ENCODE measurements at regions of chr1 and their contacts with region 1.

Region 1: DNA sequence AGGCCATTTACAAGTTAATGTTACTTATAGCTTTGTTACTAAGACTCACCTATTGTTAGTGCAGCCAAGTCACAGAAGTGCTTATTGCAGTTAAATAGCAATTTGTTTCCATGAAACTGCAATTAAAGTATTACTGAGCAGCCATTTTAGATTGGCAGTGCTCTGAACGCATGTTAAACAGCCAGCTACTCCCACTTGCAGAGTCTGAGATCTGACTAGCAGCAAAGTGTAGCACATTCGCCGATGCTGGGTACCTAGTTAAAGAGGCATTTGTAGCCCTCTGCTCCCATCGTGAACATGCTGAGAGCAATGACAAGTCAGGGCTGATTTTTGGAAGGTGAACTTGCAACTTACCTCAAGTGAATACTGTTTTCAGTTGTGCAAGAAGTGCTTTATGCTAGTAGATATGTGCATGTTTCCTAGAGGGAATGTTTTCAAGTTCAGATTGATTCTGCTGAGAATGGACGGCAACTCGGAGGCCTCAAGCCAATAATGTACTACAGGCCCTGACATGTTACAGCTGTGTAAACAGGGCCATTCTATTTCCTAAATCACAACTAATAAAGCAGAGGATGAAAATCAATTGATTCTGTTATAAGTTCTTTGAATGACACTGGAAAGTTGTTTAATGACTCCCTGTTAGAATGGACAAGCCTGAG is 19.8 kb downstream of the LMO4 start:
- DNase-seq: no peak
- ATAC-seq: peak; percentile 40
- H3K4me3 ChIP-seq: no peak overlapping the region
- H3K27ac ChIP-seq: no peak overlapping the region
- H3K4me1 ChIP-seq: no peaks in the 10 kb centered on the region
- H3K27me3 ChIP-seq: no peaks in the 10 kb centered on the region
- CTCF ChIP-seq: no peak
- EP300 ChIP-seq: no peak
- POLR2A ChIP-seq: no peak
- RAD21 ChIP-seq: no peak

Region 2: DNA sequence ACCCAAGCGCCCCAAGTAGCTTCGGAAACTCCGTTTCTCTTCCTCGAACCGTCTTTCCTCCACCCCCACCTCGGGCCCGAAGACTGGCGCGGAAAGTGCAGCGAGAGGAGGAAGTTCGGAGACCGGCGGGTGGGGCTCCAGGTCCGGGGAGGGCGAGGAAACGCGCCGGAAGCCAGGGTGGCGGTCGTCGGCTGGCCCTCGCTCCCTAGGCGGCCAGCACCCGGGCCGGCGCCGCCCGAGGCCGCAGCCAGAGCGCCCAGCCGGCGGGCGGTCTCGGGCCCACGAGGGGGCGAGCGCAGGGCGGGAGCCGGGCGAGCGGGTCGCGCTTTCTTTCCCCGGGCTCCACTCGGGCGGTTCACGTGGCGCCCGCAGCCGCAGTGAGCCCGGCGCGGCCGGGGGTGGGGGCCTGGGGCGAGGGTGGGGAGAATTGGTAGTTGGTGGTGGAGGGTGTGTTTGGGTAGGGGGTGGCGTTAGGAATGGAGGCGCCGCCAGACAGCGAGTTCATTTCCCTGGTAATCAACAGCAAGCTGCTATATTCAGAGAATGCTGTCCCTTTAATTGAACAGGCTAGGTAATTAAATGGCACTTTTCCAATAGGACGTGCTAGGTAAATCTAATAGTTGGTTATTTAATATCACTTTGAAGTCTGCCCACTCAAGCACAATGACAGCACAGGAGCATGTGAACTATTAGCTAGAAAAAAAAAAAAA is 13.1 kb before region 1 on chr1:
- CTCF ChIA-PET with region 1: no interaction called
- POLR2A ChIA-PET with region 1: interaction called, 13 read pairs
- in situ Hi-C with region 1: no loop called
- intact Hi-C with region 1: no loop called
- DNase-seq: peak; percentile 76 to 85 (median 78)
- ATAC-seq: peak; percentile 82
- H3K4me3 ChIP-seq: peak overlapping the region; percentile 52
- H3K27ac ChIP-seq: peak overlapping the region; percentile 84
- H3K4me1 ChIP-seq: peaks cover 15% of the 10 kb centered on the region in 2 experiments; a peak in 4 of 5 replicates
- H3K27me3 ChIP-seq: no peaks in the 10 kb centered on the region
- CTCF ChIP-seq: peak in 2 of 3 experiments; percentile 20 to 29; a peak in 2 of 6 replicates
- EP300 ChIP-seq: no peak
- POLR2A ChIP-seq: peak; percentile 56
- RAD21 ChIP-seq: peak; percentile 27 to 30; a peak in 3 of 4 replicates

Measured in K562 (cell line).